ENCODE measurements at regions of chr17 and their contacts with region 1.

Region 1: DNA sequence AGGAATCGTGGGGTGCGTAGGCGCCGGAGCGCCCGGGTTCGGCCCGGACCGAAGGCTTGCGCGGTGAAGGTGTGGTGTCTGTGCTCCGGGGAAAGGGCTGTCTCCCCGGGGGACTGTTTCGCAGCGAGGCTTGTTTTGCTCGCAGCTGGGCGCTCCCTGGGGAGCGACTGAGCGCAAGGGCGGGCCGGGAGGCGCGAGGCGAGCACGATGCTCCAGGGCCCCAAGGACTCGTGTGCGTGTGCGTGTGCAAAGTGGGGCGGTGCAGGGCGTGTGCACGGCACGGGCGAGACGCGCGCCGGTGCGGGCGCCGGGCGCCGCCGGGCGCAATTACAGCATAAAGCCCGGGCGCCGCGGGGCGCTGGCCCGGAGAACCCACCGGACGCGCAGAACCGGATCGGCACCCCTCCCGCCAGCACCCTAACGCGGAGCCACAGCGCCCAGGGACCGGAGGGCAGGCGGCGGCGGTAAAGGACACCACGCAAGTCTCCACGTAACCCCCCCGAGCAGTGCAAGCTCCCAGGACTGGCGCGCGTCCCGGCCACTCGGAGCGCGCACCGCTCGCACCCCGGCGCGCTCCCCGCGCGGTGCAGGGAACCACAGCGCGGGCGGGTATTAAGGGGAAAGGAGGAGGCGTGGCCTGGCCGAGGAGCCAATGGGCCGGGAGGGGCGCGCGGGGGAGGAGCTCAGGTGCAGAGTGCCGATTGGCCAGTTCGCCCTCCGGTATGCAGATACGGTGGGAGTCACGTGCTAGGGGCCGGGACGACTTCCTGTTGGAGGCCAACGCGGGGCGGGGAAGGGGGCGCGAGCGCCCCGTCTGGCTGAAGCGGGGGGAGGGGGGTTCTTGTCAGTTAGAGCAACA is at the start of gene TNRC6C:
- DNase-seq: peak; percentile 99

Region 2: GRCh38 chr17:77899498-77899897 is 58.6 kb before region 1 on chr17:
- CTCF ChIA-PET with region 1: no interaction called
- POLR2A ChIA-PET with region 1: interaction called, 16 read pairs
- DNase-seq: no peak

Region 3: DNA sequence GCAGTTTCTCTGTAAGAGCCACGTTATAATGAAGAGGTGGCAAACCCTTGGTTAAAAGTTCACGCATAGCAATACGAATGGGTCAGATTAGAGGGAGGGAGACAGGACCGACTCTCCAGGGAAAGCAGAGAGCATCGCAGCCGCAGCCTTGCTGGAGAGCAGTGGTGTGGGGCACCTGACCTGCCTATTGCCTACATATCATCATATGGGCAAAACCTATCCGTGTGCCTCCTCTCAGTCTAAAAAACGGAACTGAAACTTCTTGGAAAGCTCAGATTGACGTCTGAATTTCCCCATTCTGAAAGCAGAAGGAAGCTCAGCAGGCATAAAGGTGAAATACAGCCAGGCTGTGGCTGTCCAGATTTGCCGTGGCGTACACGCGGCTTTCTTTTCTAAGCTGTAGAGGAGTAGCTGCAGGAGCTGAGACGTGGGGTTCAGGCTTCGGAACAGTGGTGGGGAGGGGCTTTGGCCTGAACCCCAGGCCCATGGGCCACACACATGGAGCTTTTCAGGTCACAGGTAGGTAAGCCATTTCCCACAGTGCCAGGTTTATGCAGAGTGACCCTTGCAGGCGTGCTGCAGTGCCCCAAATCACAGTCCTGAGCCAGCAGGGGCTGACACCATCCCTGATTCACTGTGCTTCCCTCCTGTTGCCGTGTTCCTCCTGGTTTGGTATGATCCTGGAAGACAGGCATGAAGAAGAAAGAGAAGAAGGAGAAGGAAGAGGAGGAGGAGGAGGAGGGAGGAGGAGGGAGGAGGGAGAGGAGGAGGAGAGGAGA is 41.2 kb before region 1 on chr17:
- CTCF ChIA-PET with region 1: no interaction called
- POLR2A ChIA-PET with region 1: interaction called, 11 read pairs
- DNase-seq: no peak

Region 4: GRCh38 chr17:77935121-77935571 is 22.9 kb before region 1 on chr17:
- CTCF ChIA-PET with region 1: no interaction called
- POLR2A ChIA-PET with region 1: interaction called, 22 read pairs
- DNase-seq: no peak

Region 5: DNA sequence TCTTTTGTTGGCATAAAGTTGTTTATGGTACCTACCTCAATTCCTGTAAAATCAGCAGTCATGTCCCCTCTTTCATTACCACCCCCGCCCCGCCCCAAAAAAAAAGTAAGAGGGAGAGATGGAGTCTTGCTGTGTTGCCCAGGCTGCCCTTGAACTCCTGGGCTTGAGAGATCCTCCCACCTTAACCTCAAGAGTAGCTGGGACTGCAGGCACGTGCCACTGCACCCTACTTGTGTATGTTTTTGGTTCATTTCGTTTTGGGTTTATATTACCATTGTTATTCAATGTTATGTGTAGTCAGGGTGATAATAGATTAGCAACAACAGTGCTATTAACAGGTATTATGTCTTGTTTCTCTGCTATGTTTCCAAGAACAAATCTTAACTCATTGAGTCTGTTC is 16.3 kb after region 1 on chr17:
- CTCF ChIA-PET with region 1: interaction called, 3 read pairs
- POLR2A ChIA-PET with region 1: interaction called, 11 read pairs
- DNase-seq: no peak